Head of caudate nucleus (tissue), 42 donors: ENCODE measurements at regions of chr14 and their contacts with region 1.

Region 1: DNA sequence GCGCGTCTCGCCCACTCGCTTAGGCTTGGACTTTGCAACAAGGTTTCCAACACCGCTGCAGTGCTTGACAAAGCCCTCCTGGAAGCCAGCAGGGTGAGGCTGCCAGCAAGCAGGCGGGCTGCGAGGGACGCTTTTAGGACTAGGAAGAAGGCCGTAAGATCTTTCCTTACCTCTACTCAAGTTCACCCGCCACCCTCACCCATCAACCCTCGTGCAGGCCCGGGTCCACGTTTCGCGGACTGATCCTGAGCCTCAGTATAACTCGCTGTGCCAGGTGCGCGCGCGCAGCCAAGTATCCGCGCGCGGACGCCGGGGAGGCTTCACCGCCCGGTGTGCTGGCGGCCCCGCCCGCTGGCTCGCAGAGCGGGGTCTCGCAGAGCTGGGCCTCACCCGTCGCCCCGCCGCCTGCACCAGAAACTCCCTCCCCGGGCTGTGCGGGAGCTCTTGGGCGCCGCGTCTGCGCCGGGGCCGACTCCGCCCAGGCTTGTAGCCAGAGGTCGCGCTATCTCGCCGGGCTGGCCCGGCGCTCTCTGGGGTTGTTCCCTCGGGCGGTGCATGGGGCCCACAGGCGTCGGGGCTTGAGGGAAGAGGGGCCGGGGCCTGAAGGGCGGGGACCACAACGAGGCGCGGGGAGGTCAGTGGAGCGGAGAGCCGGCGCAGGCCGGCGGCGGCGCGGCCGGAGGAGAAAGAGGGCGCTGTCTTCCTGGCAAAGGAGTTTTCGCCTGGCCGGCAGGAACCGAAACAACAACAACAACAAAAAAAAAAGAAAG is 7.6 kb upstream of the SIX1 start:
- DNase-seq: peak in 11 of 42 donors; percentile 13 to 58 (median 25)

Region 2: DNA sequence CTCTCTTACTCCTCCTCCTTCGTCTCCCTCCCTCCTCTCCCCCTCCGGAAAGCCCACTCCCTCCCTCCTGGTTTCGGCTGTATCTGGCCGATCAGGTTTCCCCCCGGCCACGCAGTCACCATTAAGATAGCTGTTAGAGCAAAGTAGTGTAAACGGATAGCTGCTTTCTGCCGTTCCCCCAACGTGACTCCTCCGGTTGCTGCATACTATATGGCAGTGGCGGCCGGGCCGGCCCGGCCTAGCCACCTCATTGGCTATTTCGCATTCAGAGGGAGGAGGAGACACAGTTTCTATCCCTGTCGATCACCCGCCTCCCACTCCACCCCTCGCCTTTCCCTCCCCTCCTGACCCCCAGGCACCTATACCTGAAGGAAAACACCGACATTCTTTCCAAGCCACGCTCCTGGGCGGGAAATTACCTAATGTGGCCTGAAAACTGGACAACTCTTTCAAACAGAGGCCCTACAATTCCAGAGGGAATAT is 67.3 kb after region 1 on chr14 and contains the start of gene SIX4:
- intact Hi-C with region 1: loop called (anchors 5 kb)
- DNase-seq: peak in 34 of 42 donors; percentile 8 to 68 (median 29)

Region 3: DNA sequence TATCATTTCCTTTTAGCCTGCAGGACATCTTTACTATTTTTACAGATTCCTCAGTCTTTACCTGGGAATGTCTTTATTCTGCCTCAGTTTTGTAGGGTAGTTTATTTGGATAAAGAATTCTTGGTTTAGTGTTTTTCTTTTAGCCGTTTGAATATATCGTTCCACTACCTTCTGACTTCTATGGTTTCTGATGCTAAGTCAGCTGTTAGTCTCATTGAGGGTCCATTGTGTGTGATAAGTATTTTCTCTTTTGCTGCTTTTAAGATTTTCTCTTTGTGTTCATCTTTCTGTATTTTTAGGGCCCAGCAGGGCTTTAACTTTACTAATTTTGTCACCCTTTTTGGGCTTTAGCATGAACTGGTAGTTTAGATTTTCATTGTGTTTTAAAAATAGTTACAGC is 191.2 kb after region 1 on chr14:
- intact Hi-C with region 1: no loop called
- DNase-seq: no peak